ENCODE measurements at regions of chr9 and their contacts with region 1.

Region 1: GRCh38 chr9:30967484-30967883 is 1417.0 kb upstream of the ACO1 start:
- DNase-seq: peak; percentile 3
- ATAC-seq: 0 out of 2 replicates have a peak, but pooled peaks have one; percentile 40
- H3K4me3 ChIP-seq: no peak overlapping the region
- H3K27ac ChIP-seq: no peak overlapping the region
- H3K4me1 ChIP-seq: no peaks in the 10 kb centered on the region
- H3K27me3 ChIP-seq: no peaks in the 10 kb centered on the region
- CTCF ChIP-seq: 0 out of 6 replicates have a peak, but pooled peaks of 2 of the 3 experiments have one; percentile 12 to 14
- POLR2A ChIP-seq: no peak
- RAD21 ChIP-seq: peak; percentile 49

Region 2: GRCh38 chr9:29830821-29831220 is 1136.7 kb before region 1 on chr9:
- CTCF ChIA-PET with region 1: no interaction called
- POLR2A ChIA-PET with region 1: no interaction called
- RAD21 ChIA-PET with region 1: no interaction called
- intact Hi-C with region 1: loop called (anchors 5 kb)
- DNase-seq: peak; percentile 24
- ATAC-seq: peak; percentile 59
- H3K4me3 ChIP-seq: no peak overlapping the region
- H3K27ac ChIP-seq: no peak overlapping the region
- H3K4me1 ChIP-seq: no peaks in the 10 kb centered on the region
- H3K27me3 ChIP-seq: no peaks in the 10 kb centered on the region
- CTCF ChIP-seq: peak; percentile 27 to 66 (median 45); a peak in 5 of 6 replicates
- POLR2A ChIP-seq: no peak
- RAD21 ChIP-seq: peak; percentile 66

Region 3: GRCh38 chr9:31119882-31120454 is 152.5 kb after region 1 on chr9:
- CTCF ChIA-PET with region 1: no interaction called
- POLR2A ChIA-PET with region 1: no interaction called
- RAD21 ChIA-PET with region 1: no interaction called
- intact Hi-C with region 1: no loop called
- DNase-seq: peak; percentile 6
- ATAC-seq: peak; percentile 77
- H3K4me3 ChIP-seq: no peak overlapping the region
- H3K27ac ChIP-seq: no peak overlapping the region
- H3K4me1 ChIP-seq: no peaks in the 10 kb centered on the region
- H3K27me3 ChIP-seq: no peaks in the 10 kb centered on the region
- CTCF ChIP-seq: peak; percentile 24 to 49 (median 34); a peak in 5 of 6 replicates
- POLR2A ChIP-seq: no peak
- RAD21 ChIP-seq: peak; percentile 59